Ovary (tissue), 10 donors: ENCODE measurements at regions of chr3 and their contacts with region 1.

Region 1: GRCh38 chr3:58491506-58492402 is at the start of gene KCTD6:
- DNase-seq: peak; percentile 91 to 97 (median 95)
- H3K4me3 ChIP-seq: peak within 1 kb of the TSS; percentile 77
- H3K27ac ChIP-seq: peak within 1 kb of the TSS; percentile 66 to 71
- H3K4me1 ChIP-seq: peaks cover 12% of the 10 kb centered on the region
- H3K27me3 ChIP-seq: no peaks in the 10 kb centered on the region
- CTCF ChIP-seq: peak; percentile 24 to 79 (median 79)
- EP300 ChIP-seq: no peak
- POLR2A ChIP-seq: no peak
- total RNA-seq, gene KCTD6: 10.9 to 16.6 (median 13.0) TPM

Region 2: GRCh38 chr3:58324391-58325390 is 167.1 kb before region 1 on chr3:
- intact Hi-C with region 1: loop called in 1 of 4 experiments (anchors 10 kb)
- DNase-seq: no peak
- H3K4me3 ChIP-seq: no peak overlapping the region
- H3K27ac ChIP-seq: peak overlapping the region in 1 of 2 donors; percentile 60
- H3K4me1 ChIP-seq: peaks cover 10% of the 10 kb centered on the region
- H3K27me3 ChIP-seq: no peaks in the 10 kb centered on the region
- CTCF ChIP-seq: no peak
- EP300 ChIP-seq: no peak
- POLR2A ChIP-seq: no peak

Region 3: DNA sequence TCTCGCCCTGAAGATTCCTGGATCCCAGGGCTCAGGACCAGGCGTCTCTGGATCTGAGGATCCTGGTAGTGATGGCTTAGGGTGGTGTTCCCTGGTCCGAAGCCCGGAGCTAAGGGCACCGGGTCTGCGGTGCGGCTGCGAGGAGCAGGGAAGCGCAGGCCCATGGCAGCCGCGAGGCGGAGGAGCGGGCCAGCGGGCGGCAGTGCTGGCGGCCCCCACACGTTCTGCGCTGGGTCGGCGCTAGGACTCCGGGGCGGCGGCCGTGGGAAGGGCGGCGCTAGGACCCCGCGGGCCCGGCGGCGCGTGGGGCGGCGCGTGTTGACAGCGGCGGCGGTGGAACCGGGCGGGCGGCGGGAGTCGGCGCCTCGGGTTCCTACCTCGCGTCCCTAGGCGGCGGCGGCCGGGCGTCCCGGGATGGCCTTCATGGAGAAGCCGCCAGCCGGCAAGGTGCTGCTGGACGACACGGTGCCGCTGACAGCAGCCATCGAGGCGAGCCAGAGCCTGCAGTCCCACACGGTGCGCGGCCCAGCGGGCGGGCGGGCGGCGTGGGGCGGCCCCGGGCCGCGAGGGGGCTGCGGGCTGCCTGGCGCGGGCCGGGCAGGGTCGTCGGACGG is 159.1 kb before region 1 on chr3 and contains the start of gene PXK:
- intact Hi-C with region 1: loop called in 3 of 4 experiments (anchors 5 to 10 kb)
- DNase-seq: peak; percentile 76 to 85 (median 81)
- H3K4me3 ChIP-seq: peak within 1 kb of the TSS; percentile 64
- H3K27ac ChIP-seq: peak within 1 kb of the TSS in 1 of 2 donors; percentile 51
- H3K4me1 ChIP-seq: peaks cover 6% of the 10 kb centered on the region
- H3K27me3 ChIP-seq: no peaks in the 10 kb centered on the region
- CTCF ChIP-seq: peak in 2 of 3 donors; percentile 6 to 42
- EP300 ChIP-seq: no peak
- POLR2A ChIP-seq: peak; percentile 49
- total RNA-seq, gene PXK: 21.6 to 36.6 (median 25.9) TPM

Region 4: GRCh38 chr3:59424268-59425010 is 932.7 kb after region 1 on chr3:
- intact Hi-C with region 1: no loop called
- DNase-seq: no peak
- H3K4me3 ChIP-seq: no peak overlapping the region
- H3K27ac ChIP-seq: no peak overlapping the region
- H3K4me1 ChIP-seq: no peaks in the 10 kb centered on the region
- H3K27me3 ChIP-seq: no peaks in the 10 kb centered on the region
- CTCF ChIP-seq: no peak
- EP300 ChIP-seq: no peak
- POLR2A ChIP-seq: no peak